OCI-LY7 (cell line): ENCODE measurements at regions of chr16 and their contacts with region 1.

Region 1: GRCh38 chr16:80824718-80825364 is 20.4 kb upstream of the CDYL2 start:
- DNase-seq: peak; percentile 63
- H3K4me3 ChIP-seq: no peak overlapping the region
- H3K27ac ChIP-seq: no peak overlapping the region
- H3K4me1 ChIP-seq: no peaks in the 10 kb centered on the region
- CTCF ChIP-seq: peak; percentile 95

Region 2: DNA sequence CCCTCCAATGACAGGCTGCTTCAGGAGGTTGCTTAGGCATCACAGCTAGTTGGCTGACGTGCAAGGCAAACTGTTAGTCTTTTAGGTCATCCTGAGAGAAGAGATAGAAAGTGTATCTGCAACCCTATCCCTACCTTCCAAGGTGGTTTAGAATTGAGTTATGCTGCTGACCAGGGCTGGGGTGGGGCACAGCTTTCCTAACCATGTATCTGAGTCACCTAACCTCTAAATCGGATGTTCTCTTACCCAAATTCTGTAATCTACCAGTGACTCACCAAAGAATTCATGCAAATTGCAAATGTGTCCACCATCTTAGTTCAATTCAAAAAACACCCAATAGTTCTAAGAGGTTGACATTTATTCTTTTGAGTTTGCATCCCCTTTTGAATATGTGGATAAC is 391.2 kb before region 1 on chr16:
- CTCF ChIA-PET with region 1: no interaction called
- POLR2A ChIA-PET with region 1: no interaction called
- intact Hi-C with region 1: no loop called
- DNase-seq: no peak
- H3K4me3 ChIP-seq: no peak overlapping the region
- H3K27ac ChIP-seq: no peak overlapping the region
- H3K4me1 ChIP-seq: no peaks in the 10 kb centered on the region
- CTCF ChIP-seq: no peak

Region 3: GRCh38 chr16:80526425-80527061 is 298.3 kb before region 1 on chr16:
- CTCF ChIA-PET with region 1: no interaction called
- POLR2A ChIA-PET with region 1: no interaction called
- intact Hi-C with region 1: loop called (anchors 1 kb)
- DNase-seq: peak; percentile 64
- H3K4me3 ChIP-seq: no peak overlapping the region
- H3K27ac ChIP-seq: no peak overlapping the region
- H3K4me1 ChIP-seq: no peaks in the 10 kb centered on the region
- CTCF ChIP-seq: peak; percentile 94

Region 4: GRCh38 chr16:80540516-80541272 is 284.1 kb before region 1 on chr16 and contains the start of gene DYNLRB2:
- CTCF ChIA-PET with region 1: no interaction called
- POLR2A ChIA-PET with region 1: no interaction called
- intact Hi-C with region 1: loop called (anchors 5 kb)
- DNase-seq: peak; percentile 82
- H3K4me3 ChIP-seq: peak within 1 kb of the TSS; percentile 63
- H3K27ac ChIP-seq: no peak within 1 kb of the TSS
- H3K4me1 ChIP-seq: peaks cover 3% of the 10 kb centered on the region
- CTCF ChIP-seq: no peak
- total RNA-seq, gene DYNLRB2: not detected in 2 replicates

Region 5: DNA sequence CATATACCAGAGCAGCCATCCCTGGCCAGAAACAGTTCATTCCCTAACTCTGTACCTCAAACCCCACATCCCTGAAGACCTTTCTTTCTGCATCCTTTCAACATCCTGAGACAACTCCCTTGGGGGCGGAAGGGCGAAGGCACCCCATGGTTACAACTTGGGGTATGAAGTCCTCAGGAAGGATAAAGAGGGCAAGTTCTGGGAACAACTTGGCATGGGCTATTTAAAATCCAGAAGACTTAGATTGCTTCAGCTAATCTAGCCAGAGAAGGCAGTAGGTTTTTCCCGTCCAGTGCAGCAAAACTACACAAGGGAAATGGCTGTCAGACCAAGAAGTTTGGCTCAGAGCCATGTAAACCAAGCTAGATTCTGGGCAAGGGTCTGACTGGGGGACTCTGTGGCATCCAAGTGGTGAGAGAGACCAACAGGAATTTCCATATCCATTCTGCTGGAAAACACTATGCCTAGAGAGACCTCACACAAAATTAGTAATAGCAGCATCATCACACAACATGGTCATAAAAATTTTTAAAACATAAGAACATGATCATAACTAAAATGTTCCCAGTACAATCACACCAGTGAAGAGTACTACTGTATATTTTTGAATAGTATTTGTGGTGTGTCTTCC is 133.6 kb before region 1 on chr16:
- CTCF ChIA-PET with region 1: no interaction called
- POLR2A ChIA-PET with region 1: no interaction called
- intact Hi-C with region 1: no loop called
- DNase-seq: no peak
- H3K4me3 ChIP-seq: no peak overlapping the region
- H3K27ac ChIP-seq: no peak overlapping the region
- H3K4me1 ChIP-seq: no peaks in the 10 kb centered on the region
- CTCF ChIP-seq: no peak

Region 6: GRCh38 chr16:80703131-80704071 is 121.4 kb before region 1 on chr16:
- CTCF ChIA-PET with region 1: no interaction called
- POLR2A ChIA-PET with region 1: no interaction called
- intact Hi-C with region 1: no loop called
- DNase-seq: no peak
- H3K4me3 ChIP-seq: no peak overlapping the region
- H3K27ac ChIP-seq: no peak overlapping the region
- H3K4me1 ChIP-seq: no peaks in the 10 kb centered on the region
- CTCF ChIP-seq: no peak

Region 7: DNA sequence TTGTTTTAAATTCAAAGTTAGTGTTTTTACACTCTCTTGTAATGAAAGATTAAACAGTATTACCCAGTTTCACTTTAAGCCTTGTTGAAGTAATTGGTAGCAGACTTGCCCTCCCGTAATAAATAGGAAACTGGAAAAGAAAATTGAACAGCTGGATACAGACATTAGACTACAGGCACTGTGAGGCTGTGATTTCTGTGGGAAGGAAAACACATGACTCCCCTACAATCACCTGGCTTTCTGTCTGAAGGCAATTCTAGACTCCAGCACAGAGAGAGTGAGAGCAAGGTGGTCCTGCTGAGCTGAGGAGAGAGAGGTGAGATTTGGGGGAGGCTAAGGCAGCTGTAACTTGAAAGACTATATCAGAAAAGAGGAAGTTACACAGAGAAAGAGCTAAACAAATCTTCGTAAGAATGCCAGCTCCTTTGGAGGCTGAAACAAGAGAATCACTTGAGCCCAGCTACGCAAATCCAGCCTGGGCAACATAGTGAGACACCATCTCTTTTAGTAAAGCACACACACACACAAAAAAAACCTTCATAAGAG is 37.4 kb after region 1 on chr16:
- CTCF ChIA-PET with region 1: no interaction called
- POLR2A ChIA-PET with region 1: no interaction called
- intact Hi-C with region 1: no loop called
- DNase-seq: peak; percentile 13
- H3K4me3 ChIP-seq: no peak overlapping the region
- H3K27ac ChIP-seq: no peak overlapping the region
- H3K4me1 ChIP-seq: no peaks in the 10 kb centered on the region
- CTCF ChIP-seq: no peak